Naive thymus-derived CD4-positive, alpha-beta T cell (primary cell): ENCODE measurements at regions of chr1 and their contacts with region 1.

Region 1: DNA sequence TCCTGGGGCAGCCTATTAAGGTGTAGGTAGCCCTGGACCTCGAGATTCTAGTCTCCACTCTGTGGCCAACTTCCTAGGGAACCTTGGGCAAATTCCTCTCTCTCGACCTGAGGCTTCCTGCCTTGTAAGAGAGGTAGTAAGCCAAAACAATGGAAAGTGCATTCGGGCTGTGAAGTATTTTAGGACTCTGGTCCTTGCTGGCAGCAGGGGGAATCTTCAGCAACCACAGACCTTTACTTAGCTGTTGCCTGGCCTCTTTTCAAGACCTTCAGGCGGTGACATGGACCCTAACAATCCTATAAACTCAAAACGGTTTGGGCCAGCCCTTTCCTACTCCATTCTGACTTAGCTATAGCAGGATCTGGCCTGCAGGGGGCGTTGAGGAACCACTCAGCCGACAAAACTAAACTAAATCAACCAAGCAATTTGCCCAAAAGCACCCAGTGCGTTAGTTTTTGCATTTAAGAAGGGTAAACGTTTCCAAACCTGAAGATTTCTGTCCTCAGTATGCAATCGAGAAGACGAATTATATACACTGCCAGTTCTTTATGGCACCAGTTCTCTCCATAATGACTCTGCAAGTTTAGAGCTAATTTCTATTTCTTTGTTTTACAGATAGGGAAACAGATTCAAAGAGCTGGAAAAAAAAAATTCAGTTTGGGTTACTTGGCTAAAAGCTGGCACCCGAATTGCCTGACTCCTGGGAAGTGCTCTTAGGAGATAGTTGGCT is 10.9 kb upstream of the SESN2 start:
- DNase-seq: peak; percentile 67 to 86 (median 80)
- ATAC-seq: peak; percentile 36
- H3K4me3 ChIP-seq: peak overlapping the region; percentile 75
- H3K4me3 Mint-ChIP-seq: peak overlapping the region; percentile 80 to 99 (median 90)
- H3K27ac ChIP-seq: peak overlapping the region; percentile 95
- H3K27ac Mint-ChIP-seq: peak overlapping the region; percentile 90 to 100 (median 94)
- H3K4me1 ChIP-seq: peaks cover 46 to 52% of the 10 kb centered on the region in 2 donors
- H3K4me1 Mint-ChIP-seq: peaks cover 38 to 52% (median 49%) of the 10 kb centered on the region in 7 donors
- H3K27me3 ChIP-seq: no peaks in the 10 kb centered on the region
- H3K27me3 Mint-ChIP-seq: no peaks in the 10 kb centered on the region

Region 2: GRCh38 chr1:28088168-28088961 is 160.1 kb before region 1 on chr1 and contains the start of gene EYA3:
- CTCF ChIA-PET with region 1: no interaction called
- POLR2A ChIA-PET with region 1: no interaction called
- intact Hi-C with region 1: loop called in 1 of 2 experiments (anchors 1 kb)
- DNase-seq: peak; percentile 96 to 99 (median 99)
- ATAC-seq: peak; percentile 99
- H3K4me3 ChIP-seq: peak within 1 kb of the TSS; percentile 92
- H3K4me3 Mint-ChIP-seq: peak within 1 kb of the TSS; percentile 93 to 98 (median 97)
- H3K27ac ChIP-seq: peak within 1 kb of the TSS; percentile 82
- H3K27ac Mint-ChIP-seq: peak within 1 kb of the TSS; percentile 89 to 98 (median 94)
- H3K4me1 ChIP-seq: peaks cover 11 to 12% of the 10 kb centered on the region in 2 donors
- H3K4me1 Mint-ChIP-seq: peaks cover 30 to 56% (median 42%) of the 10 kb centered on the region in 7 donors
- H3K27me3 ChIP-seq: no peaks in the 10 kb centered on the region
- H3K27me3 Mint-ChIP-seq: peaks cover 0 to 8% (median 0%) of the 10 kb centered on the region in 5 donors
- total RNA-seq, gene EYA3: 14.5 to 31.7 (median 19.2) TPM

Region 3: GRCh38 chr1:28359592-28360239 is 111.3 kb after region 1 on chr1:
- CTCF ChIA-PET with region 1: interaction called, 18 read pairs
- POLR2A ChIA-PET with region 1: interaction called, 10 read pairs
- intact Hi-C with region 1: loop called (anchors 1 kb)
- DNase-seq: peak; percentile 26 to 67 (median 54)
- ATAC-seq: peak; percentile 80
- H3K4me3 ChIP-seq: no peak overlapping the region
- H3K4me3 Mint-ChIP-seq: no peak overlapping the region
- H3K27ac ChIP-seq: no peak overlapping the region
- H3K27ac Mint-ChIP-seq: no peak overlapping the region
- H3K4me1 ChIP-seq: no peaks in the 10 kb centered on the region
- H3K4me1 Mint-ChIP-seq: peaks cover 0 to 4% (median 0%) of the 10 kb centered on the region in 7 donors
- H3K27me3 ChIP-seq: no peaks in the 10 kb centered on the region
- H3K27me3 Mint-ChIP-seq: peaks cover 0 to 9% (median 0%) of the 10 kb centered on the region in 5 donors

Region 4: DNA sequence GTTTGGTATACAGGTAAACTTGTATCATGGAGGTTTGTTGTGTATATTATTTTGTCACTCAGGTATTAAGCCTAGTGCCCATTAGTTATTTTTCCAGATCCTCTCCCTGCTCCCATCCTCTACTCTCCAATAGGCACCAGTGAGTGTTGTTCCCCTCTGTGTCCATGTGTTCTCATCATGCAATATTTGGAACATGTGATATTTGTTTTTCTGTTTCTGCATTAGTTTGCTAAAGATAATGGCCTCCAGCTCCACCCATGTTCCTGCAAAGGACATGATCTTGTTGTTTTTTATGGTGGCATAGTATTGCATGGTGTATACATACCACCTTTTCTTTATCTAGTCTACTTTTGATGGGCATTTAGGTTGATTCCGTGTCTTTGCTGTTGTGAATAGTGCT is 131.9 kb after region 1 on chr1:
- CTCF ChIA-PET with region 1: no interaction called
- POLR2A ChIA-PET with region 1: no interaction called
- intact Hi-C with region 1: no loop called
- DNase-seq: no peak
- ATAC-seq: no peak
- H3K4me3 ChIP-seq: no peak overlapping the region
- H3K4me3 Mint-ChIP-seq: no peak overlapping the region
- H3K27ac ChIP-seq: no peak overlapping the region
- H3K27ac Mint-ChIP-seq: no peak overlapping the region
- H3K4me1 ChIP-seq: no peaks in the 10 kb centered on the region
- H3K4me1 Mint-ChIP-seq: peaks cover 11 to 49% (median 39%) of the 10 kb centered on the region in 7 donors
- H3K27me3 ChIP-seq: no peaks in the 10 kb centered on the region
- H3K27me3 Mint-ChIP-seq: no peaks in the 10 kb centered on the region

Region 5: DNA sequence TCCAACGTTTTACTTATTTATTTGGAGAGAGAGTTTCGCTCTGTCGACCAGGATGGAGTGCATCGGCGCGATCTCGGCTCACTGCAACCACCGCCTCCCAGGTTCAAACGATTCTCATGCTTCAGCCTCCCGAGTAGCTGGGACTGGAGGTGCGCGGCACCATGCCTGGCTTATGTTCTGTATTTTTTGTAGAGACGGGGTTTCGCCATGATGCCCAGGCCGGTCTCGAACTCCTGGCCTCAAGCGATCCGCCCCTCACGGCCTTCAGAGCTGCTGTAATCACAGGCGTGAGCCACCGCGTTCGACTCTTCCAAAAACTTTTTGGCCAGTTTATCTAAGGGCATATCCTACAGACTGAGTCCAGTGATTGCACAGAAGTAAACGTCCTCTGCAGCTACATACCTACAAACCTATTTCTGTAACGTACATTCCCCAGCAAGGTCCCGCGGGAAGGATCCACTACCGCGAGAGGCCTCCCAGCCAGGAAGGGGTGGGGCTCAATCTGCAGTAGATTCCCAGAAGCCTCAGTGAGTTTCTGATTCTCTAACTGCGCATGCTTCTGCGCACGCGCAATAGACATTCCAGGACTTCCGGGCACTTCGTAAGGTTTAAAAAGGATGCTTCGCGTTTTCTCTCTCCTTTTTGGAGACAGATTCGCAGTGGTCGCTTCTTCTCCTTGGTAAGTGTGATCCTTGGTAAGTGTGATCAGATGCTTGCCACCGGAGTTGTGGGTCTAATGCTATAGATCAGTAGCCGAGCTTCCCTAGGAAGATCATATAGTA is 257.1 kb after region 1 on chr1 and contains the start of gene RCC1:
- CTCF ChIA-PET with region 1: interaction called, 5 read pairs
- POLR2A ChIA-PET with region 1: interaction called, 6 read pairs
- intact Hi-C with region 1: loop called (anchors 1 to 2 kb)
- DNase-seq: peak; percentile 78 to 98 (median 96)
- ATAC-seq: peak; percentile 97
- H3K4me3 ChIP-seq: peak within 1 kb of the TSS; percentile 79
- H3K4me3 Mint-ChIP-seq: peak within 1 kb of the TSS; percentile 94 to 100 (median 99)
- H3K27ac ChIP-seq: peak within 1 kb of the TSS; percentile 88
- H3K27ac Mint-ChIP-seq: peak within 1 kb of the TSS; percentile 96 to 100 (median 99)
- H3K4me1 ChIP-seq: peaks cover 29 to 36% of the 10 kb centered on the region in 2 donors
- H3K4me1 Mint-ChIP-seq: peaks cover 29 to 48% (median 41%) of the 10 kb centered on the region in 7 donors
- H3K27me3 ChIP-seq: no peaks in the 10 kb centered on the region
- H3K27me3 Mint-ChIP-seq: peaks cover 0 to 3% (median 0%) of the 10 kb centered on the region in 5 donors
- total RNA-seq, gene RCC1: 9.8 to 60.7 (median 19.7) TPM

Region 6: GRCh38 chr1:28642847-28643635 is 394.6 kb after region 1 on chr1 and contains the start of gene TAF12:
- CTCF ChIA-PET with region 1: no interaction called
- POLR2A ChIA-PET with region 1: interaction called, 7 read pairs
- intact Hi-C with region 1: loop called (anchors 2 kb)
- DNase-seq: peak; percentile 81 to 92 (median 86)
- ATAC-seq: peak; percentile 91
- H3K4me3 ChIP-seq: peak within 1 kb of the TSS; percentile 93
- H3K4me3 Mint-ChIP-seq: peak within 1 kb of the TSS; percentile 94 to 100 (median 98)
- H3K27ac ChIP-seq: peak within 1 kb of the TSS; percentile 95
- H3K27ac Mint-ChIP-seq: peak within 1 kb of the TSS; percentile 93 to 99 (median 99)
- H3K4me1 ChIP-seq: peaks cover 26 to 35% of the 10 kb centered on the region in 2 donors
- H3K4me1 Mint-ChIP-seq: peaks cover 30 to 65% (median 55%) of the 10 kb centered on the region in 7 donors
- H3K27me3 ChIP-seq: no peaks in the 10 kb centered on the region
- H3K27me3 Mint-ChIP-seq: peaks cover 0 to 2% (median 0%) of the 10 kb centered on the region in 5 donors
- total RNA-seq, gene TAF12: 13.0 to 34.6 (median 19.3) TPM

Region 7: GRCh38 chr1:28886731-28887418 is 638.4 kb after region 1 on chr1:
- CTCF ChIA-PET with region 1: interaction called, 4 read pairs
- POLR2A ChIA-PET with region 1: no interaction called
- intact Hi-C with region 1: loop called (anchors 5 to 10 kb)
- DNase-seq: peak; percentile 87 to 97 (median 91)
- ATAC-seq: peak; percentile 83
- H3K4me3 ChIP-seq: peak overlapping the region; percentile 98
- H3K4me3 Mint-ChIP-seq: peak overlapping the region; percentile 70 to 95 (median 84)
- H3K27ac ChIP-seq: peak overlapping the region; percentile 79
- H3K27ac Mint-ChIP-seq: peak overlapping the region; percentile 81 to 98 (median 94)
- H3K4me1 ChIP-seq: peaks cover 32 to 36% of the 10 kb centered on the region in 2 donors
- H3K4me1 Mint-ChIP-seq: peaks cover 37 to 68% (median 50%) of the 10 kb centered on the region in 7 donors
- H3K27me3 ChIP-seq: no peaks in the 10 kb centered on the region
- H3K27me3 Mint-ChIP-seq: no peaks in the 10 kb centered on the region